Cardiac septum (tissue), 1 donor: ENCODE measurements at regions of chr12 and their contacts with region 1.

Region 1: GRCh38 chr12:123989753-123990152 is 16.7 kb downstream of the ZNF664 start:
- DNase-seq: no peak

Region 2: DNA sequence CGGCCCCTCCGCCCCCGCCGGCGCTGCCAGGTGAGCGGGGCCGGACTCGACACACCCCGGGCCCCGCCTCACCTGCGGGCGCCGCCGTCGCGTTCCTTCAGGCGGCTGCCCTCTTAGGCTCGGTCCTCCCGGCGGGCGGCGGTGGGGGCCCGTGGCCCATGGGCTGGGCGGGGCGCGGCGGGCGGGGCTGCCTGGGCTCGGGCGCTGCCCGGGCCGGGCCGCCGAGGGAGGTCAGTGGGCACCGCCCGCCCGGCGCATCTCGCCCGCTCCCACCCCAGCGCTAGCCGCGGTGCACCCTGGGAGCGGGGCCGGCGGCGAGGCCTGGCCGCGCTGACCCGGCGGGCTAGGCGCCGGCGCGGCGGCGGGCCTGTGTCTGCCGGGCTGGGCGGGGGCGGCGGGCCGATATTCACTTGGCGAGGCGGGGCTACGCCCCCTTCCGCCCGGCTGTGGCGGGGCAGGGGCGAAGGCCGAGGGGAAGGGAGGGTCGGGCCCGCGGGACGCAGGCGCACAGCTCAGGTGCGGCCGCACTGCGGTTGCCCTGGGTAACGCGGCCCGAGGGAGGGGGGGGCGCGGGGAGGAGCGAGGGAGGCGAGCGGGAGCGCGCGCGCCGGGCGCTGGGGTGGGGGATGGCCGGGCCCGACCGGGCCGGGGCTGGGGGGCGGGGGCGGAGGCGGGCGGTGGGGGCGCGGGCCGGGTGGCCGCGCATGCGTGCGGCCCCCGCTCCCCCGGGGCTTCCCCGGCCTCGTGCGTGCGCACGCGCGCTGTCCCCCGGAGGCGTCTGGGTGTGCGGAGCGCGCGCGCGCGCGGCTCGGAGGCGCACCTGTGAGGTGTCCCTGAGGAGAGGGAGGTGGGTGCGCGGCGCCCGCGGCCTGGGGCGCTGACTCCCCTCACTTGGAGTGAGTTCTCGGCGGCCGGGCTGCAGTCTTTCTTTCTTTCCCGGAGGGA is 17.0 kb before region 1 on chr12 and contains the starts of genes CCDC92 and ZNF664:
- intact Hi-C with region 1: loop called (anchors 2 kb)
- DNase-seq: peak; percentile 95
- total RNA-seq, gene CCDC92: 48.3 TPM
- total RNA-seq, gene ZNF664: 94.0 TPM

Region 3: DNA sequence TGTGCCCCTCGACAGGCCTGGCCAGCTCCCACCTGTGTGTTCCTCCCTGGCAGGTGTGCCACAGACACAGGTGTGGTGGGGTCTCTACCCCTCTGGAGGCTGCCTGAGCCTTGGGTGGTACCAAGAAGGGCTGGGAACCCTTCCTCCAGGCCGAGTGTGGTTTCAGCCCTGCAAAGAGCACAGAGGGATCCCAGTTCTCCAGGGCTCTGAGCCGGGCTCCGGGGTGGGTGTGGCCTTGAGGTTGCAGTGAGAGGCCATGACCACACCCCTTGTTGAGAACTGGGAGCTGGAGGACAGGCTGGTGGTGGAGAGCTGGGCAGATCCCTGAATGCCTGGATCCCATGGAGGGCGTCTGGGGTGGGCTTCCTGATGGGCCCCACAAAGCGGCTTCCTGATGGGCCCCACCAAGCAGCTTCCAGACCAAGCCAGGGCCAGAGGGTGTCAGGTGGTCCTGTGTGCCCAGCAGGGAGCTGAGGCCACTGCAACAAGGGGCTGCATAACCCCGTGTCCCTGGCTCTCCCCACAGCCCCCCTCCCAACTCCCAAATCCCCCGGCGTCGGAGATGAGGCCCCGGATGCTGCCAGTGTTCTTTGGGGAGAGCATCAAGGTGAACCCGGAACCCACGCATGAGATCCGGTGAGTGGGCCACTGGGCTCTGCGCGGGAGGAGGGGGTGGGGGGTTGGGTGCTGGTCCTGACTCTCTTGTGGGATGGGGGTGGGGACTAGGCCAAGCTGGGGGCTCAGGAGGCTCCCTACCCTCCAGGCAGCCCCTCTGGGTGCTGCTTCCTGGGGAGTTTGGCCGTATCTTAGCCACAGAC is 321.7 kb after region 1 on chr12:
- intact Hi-C with region 1: no loop called
- DNase-seq: no peak